ENCODE measurements at regions of chr16 and their contacts with region 1.

Region 1: GRCh38 chr16:19717771-19718602 is at the starts of genes IQCK and KNOP1:
- DNase-seq: peak; percentile 88 to 94
- H3K4me3 ChIP-seq: peak within 1 kb of the TSS; percentile 92 to 100
- H3K27ac ChIP-seq: peak within 1 kb of the TSS; percentile 79 to 83
- H3K4me1 ChIP-seq: peaks cover 0 to 27% (median 23%) of the 10 kb centered on the region in 4 donors
- H3K27me3 ChIP-seq: no peaks in the 10 kb centered on the region
- CTCF ChIP-seq: no peak

Region 2: GRCh38 chr16:19555162-19555937 is 162.6 kb before region 1 on chr16 and contains the start of gene VPS35L:
- intact Hi-C with region 1: loop called (anchors 10 kb)
- DNase-seq: peak; percentile 97 to 99
- H3K4me3 ChIP-seq: peak within 1 kb of the TSS; percentile 70 to 77
- H3K27ac ChIP-seq: peak within 1 kb of the TSS; percentile 81 to 85
- H3K4me1 ChIP-seq: peaks cover 0 to 18% (median 10%) of the 10 kb centered on the region in 4 donors
- H3K27me3 ChIP-seq: no peaks in the 10 kb centered on the region
- CTCF ChIP-seq: peak; percentile 66 to 70

Region 3: GRCh38 chr16:19765860-19766553 is 48.0 kb after region 1 on chr16:
- intact Hi-C with region 1: no loop called
- DNase-seq: peak; percentile 70 to 76
- H3K4me3 ChIP-seq: no peak overlapping the region
- H3K27ac ChIP-seq: no peak overlapping the region
- H3K4me1 ChIP-seq: peaks cover 0 to 8% (median 2%) of the 10 kb centered on the region in 4 donors
- H3K27me3 ChIP-seq: no peaks in the 10 kb centered on the region
- CTCF ChIP-seq: no peak

Measured in tibial artery (tissue), 4 donors.